CD4-positive, alpha-beta T cell (primary cell): ENCODE measurements at regions of chrX and their contacts with region 1.

Region 1: DNA sequence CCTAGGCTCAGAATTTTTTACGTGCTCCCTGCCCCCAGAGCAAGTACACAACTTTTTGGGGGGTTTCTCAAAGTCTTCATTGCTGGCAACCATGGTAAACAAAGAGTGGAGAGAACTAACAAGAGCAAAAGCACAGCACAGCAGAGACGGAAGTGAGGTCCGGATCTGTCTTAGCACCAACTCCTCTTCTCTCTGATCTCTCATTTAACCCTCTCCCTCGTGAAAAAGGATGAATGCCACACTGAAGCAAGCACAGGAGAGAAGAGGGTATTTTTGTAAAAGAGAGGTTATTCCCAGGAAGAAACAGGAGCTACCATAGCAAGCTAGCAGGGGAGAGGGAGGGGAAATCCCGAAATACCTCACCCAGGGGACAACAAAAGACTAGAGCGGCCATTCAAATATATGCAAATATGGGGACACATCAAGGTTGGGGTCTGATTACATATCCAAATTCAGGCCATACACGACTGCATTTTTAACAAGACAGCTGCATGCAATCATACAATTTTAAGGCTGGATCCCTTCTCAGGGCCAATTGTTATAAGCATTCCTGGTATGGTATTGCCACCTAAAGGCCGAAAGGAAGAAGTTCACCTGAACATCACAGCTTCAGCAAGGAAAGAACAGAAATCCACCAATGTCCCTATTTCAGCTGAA is 46.6 kb downstream of the CD40LG start:
- DNase-seq: peak in 10 of 14 experiments; percentile 6 to 83 (median 23)
- ATAC-seq: peak; percentile 70
- H3K4me3 ChIP-seq: peak overlapping the region; percentile 33
- H3K4me3 Mint-ChIP-seq: peak overlapping the region; percentile 71
- H3K27ac ChIP-seq: peak overlapping the region; percentile 81 to 87
- H3K27ac Mint-ChIP-seq: peak overlapping the region; percentile 95
- H3K4me1 ChIP-seq: peaks cover 50% of the 10 kb centered on the region
- H3K4me1 Mint-ChIP-seq: peaks cover 79% of the 10 kb centered on the region
- H3K27me3 ChIP-seq: no peaks in the 10 kb centered on the region
- H3K27me3 Mint-ChIP-seq: no peaks in the 10 kb centered on the region
- CTCF ChIP-seq: peak; percentile 66

Region 2: DNA sequence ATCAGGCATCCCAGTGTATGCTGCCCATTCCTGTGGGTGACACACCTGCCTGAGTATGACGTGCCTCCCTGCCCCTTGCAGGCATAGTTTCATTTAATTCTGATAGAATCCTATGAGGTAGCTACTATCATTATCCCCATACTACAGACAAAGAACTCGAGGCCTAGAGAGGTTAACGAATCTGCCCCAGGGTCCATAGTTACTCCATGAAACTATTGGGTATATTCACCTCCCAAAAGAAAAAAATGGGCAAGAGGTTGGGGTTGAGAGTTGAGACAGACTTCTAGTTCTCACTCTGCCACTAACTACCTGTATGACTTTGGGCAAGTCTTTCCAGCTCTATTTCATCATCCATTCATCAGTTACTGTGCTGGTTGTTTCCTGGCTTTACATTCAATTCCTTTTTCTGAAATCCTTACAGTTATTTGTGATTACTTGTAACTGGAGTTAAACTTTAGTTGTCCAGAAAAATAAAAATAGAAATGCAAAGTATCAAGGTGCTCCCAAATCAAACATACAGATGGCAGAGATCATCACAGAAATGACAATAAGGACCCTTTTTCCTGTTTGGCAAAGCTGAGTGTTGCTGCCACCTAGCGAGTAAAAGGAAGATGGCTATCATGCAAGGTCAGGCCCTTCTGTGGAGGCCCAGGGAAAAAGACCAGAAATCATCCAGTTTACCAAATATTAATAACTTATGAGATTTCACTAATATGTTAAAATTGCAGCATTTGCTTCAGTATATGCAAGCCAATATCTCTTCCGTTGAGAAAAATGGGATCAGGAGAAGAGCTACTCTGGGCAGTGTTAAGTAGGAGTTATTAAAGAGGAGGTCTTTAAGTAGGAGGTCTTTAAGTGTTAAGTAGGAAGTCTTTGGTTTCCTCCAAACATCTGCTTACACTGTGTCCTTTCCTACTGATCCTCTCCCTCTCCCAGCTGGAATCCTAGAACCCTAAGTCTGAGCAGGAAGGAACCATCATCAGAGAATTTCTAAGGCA is 426.2 kb before region 1 on chrX:
- CTCF ChIA-PET with region 1: no interaction called
- POLR2A ChIA-PET with region 1: no interaction called
- intact Hi-C with region 1: loop called in 1 of 2 experiments (anchors 5 kb)
- DNase-seq: peak; percentile 9 to 69 (median 30)
- ATAC-seq: peak; percentile 60
- H3K4me3 ChIP-seq: no peak overlapping the region
- H3K4me3 Mint-ChIP-seq: no peak overlapping the region
- H3K27ac ChIP-seq: no peak overlapping the region
- H3K27ac Mint-ChIP-seq: no peak overlapping the region
- H3K4me1 ChIP-seq: no peaks in the 10 kb centered on the region
- H3K4me1 Mint-ChIP-seq: no peaks in the 10 kb centered on the region
- H3K27me3 ChIP-seq: no peaks in the 10 kb centered on the region
- H3K27me3 Mint-ChIP-seq: no peaks in the 10 kb centered on the region
- CTCF ChIP-seq: peak; percentile 64

Region 3: DNA sequence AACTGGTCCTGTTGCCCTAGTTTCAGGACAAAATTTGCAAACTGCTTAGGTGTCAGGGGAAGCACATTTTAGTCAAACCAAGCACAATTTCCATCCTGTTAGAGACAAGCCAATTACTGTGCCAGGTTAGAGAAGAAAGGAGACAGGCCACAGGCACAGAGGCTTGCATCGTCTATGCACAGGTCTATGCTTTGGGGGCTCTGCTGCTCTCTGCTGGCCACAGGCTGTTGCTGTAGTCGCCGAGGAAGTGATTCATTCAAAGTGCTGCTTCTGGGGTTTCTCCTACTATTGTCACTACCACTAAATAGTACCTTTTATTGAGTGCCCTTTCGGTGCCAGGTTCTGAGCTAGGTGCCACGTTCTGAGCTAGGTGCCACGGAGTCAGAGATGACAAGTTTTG is 117.0 kb before region 1 on chrX:
- CTCF ChIA-PET with region 1: interaction called, 9 read pairs
- POLR2A ChIA-PET with region 1: interaction called, 5 read pairs
- intact Hi-C with region 1: loop called in 1 of 2 experiments (anchors 2 kb)
- DNase-seq: peak; percentile 45 to 85 (median 62)
- ATAC-seq: peak; percentile 100
- H3K4me3 ChIP-seq: no peak overlapping the region
- H3K4me3 Mint-ChIP-seq: no peak overlapping the region
- H3K27ac ChIP-seq: no peak overlapping the region
- H3K27ac Mint-ChIP-seq: peak overlapping the region; percentile 61
- H3K4me1 ChIP-seq: peaks cover 12% of the 10 kb centered on the region
- H3K4me1 Mint-ChIP-seq: peaks cover 13% of the 10 kb centered on the region
- H3K27me3 ChIP-seq: no peaks in the 10 kb centered on the region
- H3K27me3 Mint-ChIP-seq: no peaks in the 10 kb centered on the region
- CTCF ChIP-seq: peak; percentile 63

Region 4: GRCh38 chrX:136635235-136635634 is 59.3 kb before region 1 on chrX:
- CTCF ChIA-PET with region 1: interaction called, 4 read pairs
- POLR2A ChIA-PET with region 1: interaction called, 11 read pairs
- intact Hi-C with region 1: loop called in 1 of 2 experiments (anchors 10 kb)
- DNase-seq: peak in 4 of 14 experiments; percentile 28 to 76 (median 70)
- ATAC-seq: peak; percentile 80
- H3K4me3 ChIP-seq: peak overlapping the region; percentile 27
- H3K4me3 Mint-ChIP-seq: peak overlapping the region; percentile 58
- H3K27ac ChIP-seq: peak overlapping the region; percentile 39 to 47
- H3K27ac Mint-ChIP-seq: peak overlapping the region; percentile 88
- H3K4me1 ChIP-seq: peaks cover 83% of the 10 kb centered on the region
- H3K4me1 Mint-ChIP-seq: peaks cover 88% of the 10 kb centered on the region
- H3K27me3 ChIP-seq: no peaks in the 10 kb centered on the region
- H3K27me3 Mint-ChIP-seq: no peaks in the 10 kb centered on the region
- CTCF ChIP-seq: no peak

Region 5: GRCh38 chrX:136658151-136658550 is 36.4 kb before region 1 on chrX:
- CTCF ChIA-PET with region 1: interaction called, 5 read pairs
- POLR2A ChIA-PET with region 1: interaction called, 32 read pairs
- intact Hi-C with region 1: loop called in 1 of 2 experiments (anchors 5 kb)
- DNase-seq: peak in 5 of 14 experiments; percentile 16 to 50 (median 45)
- ATAC-seq: peak; percentile 10
- H3K4me3 ChIP-seq: peak overlapping the region; percentile 36
- H3K4me3 Mint-ChIP-seq: peak overlapping the region; percentile 99
- H3K27ac ChIP-seq: peak overlapping the region; percentile 74 to 75
- H3K27ac Mint-ChIP-seq: peak overlapping the region; percentile 92
- H3K4me1 ChIP-seq: peaks cover 76% of the 10 kb centered on the region
- H3K4me1 Mint-ChIP-seq: peaks cover 98% of the 10 kb centered on the region
- H3K27me3 ChIP-seq: no peaks in the 10 kb centered on the region
- H3K27me3 Mint-ChIP-seq: no peaks in the 10 kb centered on the region
- CTCF ChIP-seq: no peak

Region 6: DNA sequence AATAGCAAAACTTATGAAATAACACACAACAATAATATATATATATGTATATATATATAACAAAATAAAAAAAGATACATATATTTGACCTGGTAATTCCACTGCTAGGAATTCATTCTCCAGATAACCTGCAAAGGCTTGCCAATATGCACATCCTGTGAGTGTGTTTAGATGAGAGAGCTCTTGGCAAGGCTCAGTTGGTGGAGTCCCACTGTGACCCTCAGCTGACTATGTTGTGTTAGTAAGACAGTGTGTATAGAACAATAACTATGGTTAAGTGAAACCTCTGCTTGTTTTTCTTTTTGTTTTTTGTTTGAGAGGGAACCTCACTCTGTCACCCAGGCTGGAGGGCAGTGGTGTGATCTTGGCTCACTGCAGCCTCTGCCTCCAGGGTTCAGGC is 225.4 kb after region 1 on chrX:
- CTCF ChIA-PET with region 1: no interaction called
- POLR2A ChIA-PET with region 1: no interaction called
- intact Hi-C with region 1: loop called in 1 of 2 experiments (anchors 5 kb)
- DNase-seq: no peak
- ATAC-seq: no peak
- H3K4me3 ChIP-seq: no peak overlapping the region
- H3K4me3 Mint-ChIP-seq: no peak overlapping the region
- H3K27ac ChIP-seq: no peak overlapping the region
- H3K27ac Mint-ChIP-seq: no peak overlapping the region
- H3K4me1 ChIP-seq: peaks cover 2% of the 10 kb centered on the region
- H3K4me1 Mint-ChIP-seq: peaks cover 3% of the 10 kb centered on the region
- H3K27me3 ChIP-seq: no peaks in the 10 kb centered on the region
- H3K27me3 Mint-ChIP-seq: no peaks in the 10 kb centered on the region
- CTCF ChIP-seq: no peak